ENCODE measurements at regions of chr19 and their contacts with region 1.

Region 1: DNA sequence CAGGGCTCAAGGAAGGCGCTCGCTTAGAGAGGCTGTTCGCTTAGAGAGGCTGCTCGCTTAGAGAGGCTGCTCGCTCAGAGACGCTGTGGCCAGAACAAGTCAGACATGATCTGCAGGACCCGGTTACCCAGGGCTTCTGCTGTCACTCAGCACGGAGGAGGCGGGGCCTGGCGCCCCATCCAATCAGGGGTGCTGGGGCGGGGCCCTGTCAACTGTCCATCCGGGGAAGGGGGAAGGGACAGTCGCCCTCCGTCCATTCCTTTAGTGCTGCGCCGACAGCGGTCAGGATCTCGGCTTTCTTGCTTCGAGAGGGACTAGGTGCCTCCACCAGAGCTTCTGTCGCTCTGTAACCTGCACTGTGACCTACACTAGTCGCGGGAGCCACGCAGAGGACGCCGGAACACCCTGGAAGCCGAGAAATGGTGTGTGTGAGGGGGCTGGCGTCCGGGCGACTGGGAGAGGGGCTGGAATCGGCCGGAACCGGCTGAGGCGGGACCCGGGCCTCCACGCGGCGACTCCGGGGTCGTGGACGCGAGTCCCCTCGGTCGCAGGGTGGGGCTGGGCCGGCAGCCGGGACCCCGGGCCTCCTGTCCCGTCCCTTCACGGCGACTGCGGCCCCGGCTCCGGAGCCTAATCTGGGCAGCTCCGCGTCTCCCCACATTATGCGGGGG is at the start of gene ZNF440:
- DNase-seq: peak; percentile 83
- ATAC-seq: peak; percentile 99
- H3K4me3 Mint-ChIP-seq: peak within 1 kb of the TSS; percentile 92
- H3K27ac Mint-ChIP-seq: peak within 1 kb of the TSS; percentile 84
- H3K4me1 Mint-ChIP-seq: peaks cover 28% of the 10 kb centered on the region
- H3K27me3 Mint-ChIP-seq: no peaks in the 10 kb centered on the region
- CTCF ChIP-seq: no peak
- total RNA-seq, gene ZNF440: 17.7 and 18.5 TPM in 2 replicates

Region 2: DNA sequence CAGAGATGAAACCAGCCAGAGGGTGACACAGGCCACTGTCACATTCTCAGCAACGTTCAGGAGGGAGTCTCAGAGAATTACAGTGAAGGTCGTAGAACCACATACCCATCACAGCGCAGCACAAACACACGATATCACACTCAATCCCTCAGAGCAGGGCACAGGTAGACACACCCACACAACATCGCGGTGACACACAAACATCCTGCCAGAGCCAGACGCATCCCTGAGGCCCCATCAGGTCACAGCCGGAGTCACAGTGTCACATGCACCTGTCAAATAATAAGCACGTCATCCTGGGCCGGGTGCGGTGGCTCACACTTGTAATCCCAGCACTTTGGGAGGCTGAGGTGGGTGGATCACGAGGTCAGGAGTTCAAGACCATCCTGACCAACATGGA is 350.8 kb before region 1 on chr19:
- CTCF ChIA-PET with region 1: no interaction called
- POLR2A ChIA-PET with region 1: no interaction called
- intact Hi-C with region 1: no loop called
- DNase-seq: no peak
- ATAC-seq: no peak
- H3K4me3 Mint-ChIP-seq: no peak overlapping the region
- H3K27ac Mint-ChIP-seq: no peak overlapping the region
- H3K4me1 Mint-ChIP-seq: no peaks in the 10 kb centered on the region
- H3K27me3 Mint-ChIP-seq: peaks cover 11% of the 10 kb centered on the region
- CTCF ChIP-seq: no peak

Region 3: GRCh38 chr19:11673608-11674041 is 140.5 kb before region 1 on chr19:
- CTCF ChIA-PET with region 1: no interaction called
- POLR2A ChIA-PET with region 1: no interaction called
- intact Hi-C with region 1: loop called (anchors 1 kb)
- DNase-seq: no peak
- ATAC-seq: peak; percentile 34
- H3K4me3 Mint-ChIP-seq: peak overlapping the region; percentile 50
- H3K27ac Mint-ChIP-seq: no peak overlapping the region
- H3K4me1 Mint-ChIP-seq: peaks cover 8% of the 10 kb centered on the region
- H3K27me3 Mint-ChIP-seq: peaks cover 29% of the 10 kb centered on the region
- CTCF ChIP-seq: no peak

Region 4: DNA sequence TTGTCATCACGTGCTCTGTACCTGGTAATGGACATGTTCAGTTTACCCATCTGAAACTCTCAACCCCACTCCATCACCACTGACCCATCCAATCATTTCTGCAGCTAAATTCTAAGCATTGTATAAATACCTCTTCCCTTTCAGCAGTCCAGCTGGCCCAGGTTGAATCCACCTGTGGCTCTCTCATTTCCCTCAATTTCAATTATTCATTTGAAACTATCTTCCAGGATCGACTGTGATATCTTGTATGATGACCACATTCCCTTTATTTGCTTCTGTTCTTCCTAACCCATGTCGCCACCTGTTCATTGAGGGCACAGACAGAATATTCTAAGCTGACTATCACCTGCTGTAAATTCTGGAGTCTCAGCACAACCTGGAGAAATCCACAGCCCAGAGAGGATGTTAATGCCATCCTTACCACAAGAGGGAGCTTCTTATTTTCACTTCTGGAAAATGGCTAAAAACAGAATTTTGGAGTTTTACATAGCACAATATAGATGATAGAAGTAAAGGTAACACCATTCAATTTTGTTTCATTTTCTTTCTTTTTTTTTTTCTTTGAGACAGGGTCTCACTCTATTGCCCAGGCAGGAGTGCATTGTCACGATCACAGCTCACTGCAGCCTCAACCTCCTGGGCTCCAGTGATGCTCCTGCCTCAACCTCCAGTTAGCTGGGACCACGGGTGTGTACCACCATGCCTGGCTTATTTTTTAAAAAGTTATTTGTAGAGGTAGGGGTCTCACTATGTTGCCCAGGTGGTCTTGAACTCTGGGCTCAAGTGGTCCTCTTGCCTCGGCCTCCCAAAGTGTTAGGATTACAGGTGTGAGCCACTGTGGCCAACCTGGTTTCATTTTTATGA is 114.0 kb before region 1 on chr19:
- CTCF ChIA-PET with region 1: interaction called, 3 read pairs
- POLR2A ChIA-PET with region 1: no interaction called
- intact Hi-C with region 1: loop called (anchors 1 kb)
- DNase-seq: no peak
- ATAC-seq: no peak
- H3K4me3 Mint-ChIP-seq: no peak overlapping the region
- H3K27ac Mint-ChIP-seq: no peak overlapping the region
- H3K4me1 Mint-ChIP-seq: peaks cover under 1% of the 10 kb centered on the region
- H3K27me3 Mint-ChIP-seq: peaks cover 7% of the 10 kb centered on the region
- CTCF ChIP-seq: no peak

Region 5: GRCh38 chr19:11766597-11767591 is 47.3 kb before region 1 on chr19 and contains the start of gene ZNF441:
- CTCF ChIA-PET with region 1: no interaction called
- POLR2A ChIA-PET with region 1: interaction called, 5 read pairs
- intact Hi-C with region 1: loop called (anchors 1 kb)
- DNase-seq: peak; percentile 87
- ATAC-seq: peak; percentile 95
- H3K4me3 Mint-ChIP-seq: peak within 1 kb of the TSS; percentile 99
- H3K27ac Mint-ChIP-seq: peak within 1 kb of the TSS; percentile 96
- H3K4me1 Mint-ChIP-seq: peaks cover 25% of the 10 kb centered on the region
- H3K27me3 Mint-ChIP-seq: peaks cover 2% of the 10 kb centered on the region
- CTCF ChIP-seq: no peak
- total RNA-seq, gene ZNF441: 23.3 and 23.9 TPM in 2 replicates

Region 6: GRCh38 chr19:11848594-11849469 is 34.7 kb after region 1 on chr19 and contains the start of gene ZNF439:
- CTCF ChIA-PET with region 1: no interaction called
- POLR2A ChIA-PET with region 1: no interaction called
- intact Hi-C with region 1: loop called (anchors 1 kb)
- DNase-seq: peak; percentile 87
- ATAC-seq: peak; percentile 99
- H3K4me3 Mint-ChIP-seq: peak within 1 kb of the TSS; percentile 94
- H3K27ac Mint-ChIP-seq: peak within 1 kb of the TSS; percentile 92
- H3K4me1 Mint-ChIP-seq: peaks cover 36% of the 10 kb centered on the region
- H3K27me3 Mint-ChIP-seq: no peaks in the 10 kb centered on the region
- CTCF ChIP-seq: no peak
- total RNA-seq, gene ZNF439: 19.9 and 22.8 TPM in 2 replicates

Region 7: GRCh38 chr19:12314553-12314952 is 500.4 kb after region 1 on chr19:
- CTCF ChIA-PET with region 1: no interaction called
- POLR2A ChIA-PET with region 1: no interaction called
- intact Hi-C with region 1: no loop called
- DNase-seq: no peak
- ATAC-seq: no peak
- H3K4me3 Mint-ChIP-seq: no peak overlapping the region
- H3K27ac Mint-ChIP-seq: no peak overlapping the region
- H3K4me1 Mint-ChIP-seq: no peaks in the 10 kb centered on the region
- H3K27me3 Mint-ChIP-seq: no peaks in the 10 kb centered on the region
- CTCF ChIP-seq: no peak